Right ventricle myocardium inferior (tissue), 1 donor: ENCODE measurements at regions of chr15 and their contacts with region 1.

Region 1: GRCh38 chr15:81914734-81915256 is 131.0 kb downstream of the MEX3B start:
- DNase-seq: peak; percentile 77
- ATAC-seq: peak; percentile 91

Region 2: DNA sequence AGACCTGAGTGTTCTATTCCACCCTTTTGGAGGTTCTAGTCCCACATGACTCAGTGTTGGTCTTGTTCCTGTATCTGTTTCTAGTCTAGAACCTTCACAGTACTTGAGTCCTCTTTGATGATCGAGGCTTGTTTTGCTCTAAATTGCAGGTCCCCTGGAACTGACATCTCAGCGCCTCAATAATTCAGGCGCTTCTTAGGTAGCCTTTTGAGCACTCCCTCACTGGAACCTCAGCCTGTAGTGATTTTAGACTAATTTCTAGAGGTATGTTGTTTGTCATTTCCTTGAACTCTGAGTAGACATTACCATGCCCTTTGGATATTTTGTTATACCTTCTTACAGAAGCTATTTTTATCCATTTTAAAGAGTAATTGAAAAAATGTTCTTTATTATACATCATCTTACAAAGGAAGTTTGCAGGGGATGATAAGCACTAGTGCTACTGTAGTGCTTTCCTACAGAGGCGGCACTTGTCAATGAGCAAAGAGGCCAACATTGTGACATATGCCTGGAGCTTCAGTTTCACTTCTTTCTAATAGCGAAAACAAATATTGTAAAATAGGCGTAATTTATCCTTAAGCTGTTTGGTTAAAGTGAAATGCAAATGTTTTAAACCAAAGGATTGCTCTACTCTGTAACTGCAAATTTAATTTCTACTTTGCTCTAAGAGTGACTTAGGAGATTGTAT is 272.1 kb after region 1 on chr15:
- intact Hi-C with region 1: loop called (anchors 10 kb)
- DNase-seq: no peak
- ATAC-seq: no peak

Region 3: GRCh38 chr15:82239685-82240391 is 325.0 kb after region 1 on chr15:
- intact Hi-C with region 1: no loop called
- DNase-seq: no peak
- ATAC-seq: no peak